ENCODE measurements at regions of chr3 and their contacts with region 1.

Region 1: GRCh38 chr3:149273096-149273751 is 51.6 kb upstream of the CP start:
- DNase-seq: peak; percentile 56
- CTCF ChIP-seq: peak; percentile 95

Region 2: DNA sequence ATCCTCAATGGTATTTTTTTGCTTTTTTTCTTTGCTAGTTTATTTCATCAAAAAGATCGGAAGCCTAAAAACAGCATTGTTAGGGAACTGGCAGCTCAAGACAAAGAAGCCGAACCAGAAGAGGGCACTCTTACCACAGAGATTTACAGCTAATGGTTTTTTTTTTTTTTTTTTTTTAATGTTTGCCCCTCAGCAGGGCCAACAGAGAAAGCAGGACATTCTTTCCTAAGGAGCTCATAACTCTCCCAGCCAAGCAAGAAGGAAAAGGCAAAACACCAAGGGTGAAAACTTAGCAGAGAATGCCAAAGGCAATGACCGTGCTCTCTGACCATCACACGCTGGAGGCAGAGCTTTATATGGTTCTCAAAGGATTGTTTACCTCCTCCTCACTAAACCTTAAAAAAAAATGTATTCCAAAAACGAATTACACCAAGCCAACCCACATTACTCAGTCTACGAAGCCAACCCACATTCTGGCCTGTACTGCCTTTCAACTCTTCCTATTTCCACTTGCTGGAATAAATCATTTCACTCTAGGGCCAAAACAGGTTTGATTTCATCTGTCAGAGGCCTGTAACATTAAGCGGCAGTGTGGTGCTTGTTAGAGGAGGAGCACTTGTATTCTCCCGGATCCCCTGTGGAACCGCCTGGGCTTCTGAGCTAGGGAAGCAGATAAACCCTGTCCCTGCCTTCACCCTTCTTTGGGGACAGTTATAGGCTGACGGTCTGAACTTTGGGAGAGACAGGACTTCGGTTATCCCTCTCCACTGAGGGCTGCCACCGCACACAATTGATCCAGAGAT is 317.5 kb before region 1 on chr3:
- in situ Hi-C with region 1: loop called (anchors 10 kb)
- DNase-seq: peak; percentile 16
- CTCF ChIP-seq: peak; percentile 59

Region 3: DNA sequence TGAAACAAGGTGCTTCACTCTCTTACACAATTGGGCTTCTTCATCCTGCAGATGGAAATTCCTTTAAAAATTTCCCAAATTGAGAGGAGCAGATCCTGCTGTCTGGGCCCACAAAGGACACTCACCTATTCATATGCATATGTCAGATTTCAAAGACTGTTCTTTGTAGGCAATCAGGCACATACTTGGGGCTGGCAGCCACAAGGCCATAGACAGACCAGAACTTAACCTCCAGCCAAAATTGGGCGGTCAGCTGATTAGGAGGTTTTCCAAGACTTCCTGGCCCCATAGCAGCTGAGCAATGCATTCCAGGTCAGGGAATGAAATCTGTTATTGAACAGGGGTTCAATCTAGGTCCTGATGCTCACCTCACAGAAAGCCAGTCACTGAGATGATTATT is 158.8 kb before region 1 on chr3:
- in situ Hi-C with region 1: loop called (anchors 10 kb)
- DNase-seq: no peak
- CTCF ChIP-seq: no peak

Region 4: DNA sequence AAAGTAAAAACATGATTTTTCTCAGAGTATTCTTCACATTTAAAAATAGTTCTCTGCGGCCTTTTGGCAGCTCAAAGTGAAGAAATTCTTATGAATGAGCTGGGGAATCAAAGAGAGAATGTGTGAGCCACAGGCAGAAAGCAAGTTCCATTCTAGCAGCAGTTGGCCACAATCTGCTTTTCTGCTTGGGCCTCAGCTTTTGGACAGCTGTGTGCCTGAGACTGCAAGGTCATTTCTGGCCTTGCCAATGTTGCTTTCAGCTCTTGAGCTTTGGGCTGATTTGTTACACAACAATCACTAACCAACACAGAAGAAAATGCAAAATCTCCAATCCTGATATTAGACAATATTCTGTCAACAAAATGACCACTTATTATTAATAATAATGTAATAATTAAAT is 186.9 kb after region 1 on chr3:
- in situ Hi-C with region 1: no loop called
- DNase-seq: no peak
- CTCF ChIP-seq: no peak

Measured in GM13977 (cell line).